ENCODE measurements at regions of chr7 and their contacts with region 1.

Region 1: DNA sequence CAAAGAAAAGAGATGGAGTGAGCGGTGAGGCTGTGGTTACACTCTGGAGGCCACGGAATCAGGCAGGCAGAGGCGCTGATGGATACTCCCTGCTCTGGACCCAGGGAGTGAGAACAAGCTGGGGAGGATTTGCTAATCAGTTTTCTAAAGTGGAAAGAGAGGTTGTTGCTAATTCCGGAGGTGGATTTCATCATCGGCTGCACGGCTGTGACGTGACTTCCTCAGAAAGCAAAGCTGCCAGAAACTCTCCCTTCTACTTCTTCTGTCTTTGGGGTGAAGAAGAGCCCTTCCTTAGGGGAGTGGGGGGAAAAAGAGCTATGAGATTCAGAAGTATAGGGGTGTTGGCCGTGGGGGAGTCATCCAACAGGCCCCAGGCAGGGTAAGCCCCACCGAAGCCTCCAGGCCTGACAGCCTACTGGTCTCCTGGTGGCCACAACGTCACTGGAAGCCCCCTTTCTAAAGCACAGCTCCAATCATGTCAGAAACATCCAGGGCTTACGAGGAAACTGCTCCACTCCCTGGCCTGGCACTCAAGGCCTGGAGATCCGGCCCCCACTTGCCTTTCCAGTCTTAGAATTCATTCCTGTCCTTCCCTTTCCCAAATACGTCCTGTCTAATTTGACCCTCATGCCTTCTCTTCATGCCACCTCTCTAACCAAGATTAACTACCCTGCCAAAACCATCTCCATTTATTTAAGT is 114.5 kb downstream of the HIP1 start:
- DNase-seq: peak; percentile 42
- H3K4me3 ChIP-seq: no peak overlapping the region
- H3K27ac ChIP-seq: no peak overlapping the region
- H3K4me1 ChIP-seq: peaks cover 42% of the 10 kb centered on the region
- CTCF ChIP-seq: no peak

Region 2: DNA sequence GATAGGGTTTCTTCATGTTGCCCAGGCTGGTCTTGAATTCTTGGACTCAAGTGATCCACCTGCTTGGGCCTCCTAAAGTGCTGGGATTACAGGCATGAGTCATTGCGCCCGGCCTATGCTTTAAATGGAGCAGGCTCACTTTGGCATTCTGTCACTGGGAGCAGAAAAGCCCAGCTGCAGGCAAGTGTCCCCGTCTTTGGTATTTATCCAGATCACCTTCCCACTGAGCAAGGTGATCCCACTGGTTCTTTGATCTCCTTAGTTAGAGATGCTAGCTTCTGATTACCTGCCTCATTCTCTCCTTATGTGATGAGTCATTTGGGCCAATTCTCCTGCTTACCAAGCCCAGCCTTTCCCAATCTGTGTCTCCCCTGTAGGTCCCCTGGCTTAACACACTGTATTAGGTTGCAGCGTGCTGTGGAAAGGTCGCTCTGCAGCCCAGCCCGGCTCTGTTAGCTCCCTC is 92.9 kb before region 1 on chr7:
- CTCF ChIA-PET with region 1: no interaction called
- POLR2A ChIA-PET with region 1: interaction called, 4 read pairs
- intact Hi-C with region 1: loop called (anchors 5 kb)
- DNase-seq: no peak
- H3K4me3 ChIP-seq: no peak overlapping the region
- H3K27ac ChIP-seq: no peak overlapping the region
- H3K4me1 ChIP-seq: peaks cover 11% of the 10 kb centered on the region
- CTCF ChIP-seq: no peak

Region 3: DNA sequence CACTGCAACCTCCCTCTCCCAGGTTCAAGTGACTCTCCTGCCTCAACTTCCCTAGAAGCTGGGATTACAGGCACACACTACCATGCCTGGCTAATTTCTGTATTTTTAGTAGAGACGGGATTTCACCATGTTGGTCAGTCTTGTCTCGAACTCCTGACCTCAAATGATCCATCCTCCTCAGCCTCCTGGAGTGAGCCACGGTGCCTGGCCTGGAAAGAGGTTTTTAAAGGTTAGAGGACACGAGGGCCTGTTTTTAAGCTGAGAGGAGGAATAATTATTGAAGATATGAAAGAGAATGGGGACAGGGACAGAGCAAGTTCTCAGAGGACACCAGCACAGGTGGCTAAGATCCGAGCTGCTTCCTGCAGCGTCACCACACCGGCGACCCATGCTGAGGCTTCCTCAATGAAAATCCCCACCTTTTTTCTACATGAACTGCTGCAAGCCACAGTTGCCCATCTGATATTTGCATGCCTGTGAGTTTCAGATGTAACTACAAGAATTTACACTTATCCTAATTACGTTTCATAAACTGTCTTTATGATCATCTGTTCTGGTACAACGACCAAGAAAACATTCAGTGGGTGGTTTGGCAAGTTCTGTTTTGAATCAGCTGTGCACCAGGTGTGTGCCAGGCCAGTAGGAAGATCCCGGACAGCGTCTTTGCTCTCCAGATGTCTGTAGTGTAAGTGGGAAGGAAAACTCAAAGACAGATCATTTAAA is 38.5 kb after region 1 on chr7:
- CTCF ChIA-PET with region 1: no interaction called
- POLR2A ChIA-PET with region 1: interaction called, 9 read pairs
- intact Hi-C with region 1: loop called (anchors 1 kb)
- DNase-seq: peak; percentile 91
- H3K4me3 ChIP-seq: peak overlapping the region; percentile 58
- H3K27ac ChIP-seq: peak overlapping the region; percentile 95
- H3K4me1 ChIP-seq: peaks cover 44% of the 10 kb centered on the region
- CTCF ChIP-seq: no peak

Region 4: GRCh38 chr7:75679060-75679459 is 54.8 kb after region 1 on chr7:
- CTCF ChIA-PET with region 1: no interaction called
- POLR2A ChIA-PET with region 1: no interaction called
- intact Hi-C with region 1: no loop called
- DNase-seq: no peak
- H3K4me3 ChIP-seq: no peak overlapping the region
- H3K27ac ChIP-seq: no peak overlapping the region
- H3K4me1 ChIP-seq: no peaks in the 10 kb centered on the region
- CTCF ChIP-seq: no peak

Region 5: GRCh38 chr7:75711656-75712514 is 87.6 kb after region 1 on chr7:
- CTCF ChIA-PET with region 1: no interaction called
- POLR2A ChIA-PET with region 1: interaction called, 5 read pairs
- intact Hi-C with region 1: loop called (anchors 5 kb)
- DNase-seq: peak; percentile 86
- H3K4me3 ChIP-seq: peak overlapping the region; percentile 53
- H3K27ac ChIP-seq: peak overlapping the region; percentile 98
- H3K4me1 ChIP-seq: peaks cover 41% of the 10 kb centered on the region
- CTCF ChIP-seq: no peak

Region 6: GRCh38 chr7:75738987-75739795 is 114.9 kb after region 1 on chr7:
- CTCF ChIA-PET with region 1: no interaction called
- POLR2A ChIA-PET with region 1: no interaction called
- intact Hi-C with region 1: loop called (anchors 2 kb)
- DNase-seq: peak; percentile 99
- H3K4me3 ChIP-seq: peak overlapping the region; percentile 82
- H3K27ac ChIP-seq: peak overlapping the region; percentile 90
- H3K4me1 ChIP-seq: peaks cover 63% of the 10 kb centered on the region
- CTCF ChIP-seq: no peak

Measured in OCI-LY7 (cell line).